CD8-positive, alpha-beta memory T cell (primary cell): ENCODE measurements at regions of chr15 and their contacts with region 1.

Region 1: GRCh38 chr15:44663409-44664308 is at the start of gene SPG11:
- DNase-seq: peak; percentile 90 to 98 (median 92)
- H3K4me3 ChIP-seq: peak within 1 kb of the TSS; percentile 67
- H3K4me3 Mint-ChIP-seq: peak within 1 kb of the TSS; percentile 95 to 99 (median 98)
- H3K27ac ChIP-seq: peak within 1 kb of the TSS; percentile 86
- H3K27ac Mint-ChIP-seq: peak within 1 kb of the TSS; percentile 93 to 98 (median 98)
- H3K4me1 ChIP-seq: peaks cover 61% of the 10 kb centered on the region
- H3K4me1 Mint-ChIP-seq: peaks cover 59 to 80% (median 78%) of the 10 kb centered on the region in 3 donors
- H3K27me3 ChIP-seq: no peaks in the 10 kb centered on the region
- H3K27me3 Mint-ChIP-seq: no peaks in the 10 kb centered on the region
- total RNA-seq, gene SPG11: 60.8 to 62.1 TPM

Region 2: DNA sequence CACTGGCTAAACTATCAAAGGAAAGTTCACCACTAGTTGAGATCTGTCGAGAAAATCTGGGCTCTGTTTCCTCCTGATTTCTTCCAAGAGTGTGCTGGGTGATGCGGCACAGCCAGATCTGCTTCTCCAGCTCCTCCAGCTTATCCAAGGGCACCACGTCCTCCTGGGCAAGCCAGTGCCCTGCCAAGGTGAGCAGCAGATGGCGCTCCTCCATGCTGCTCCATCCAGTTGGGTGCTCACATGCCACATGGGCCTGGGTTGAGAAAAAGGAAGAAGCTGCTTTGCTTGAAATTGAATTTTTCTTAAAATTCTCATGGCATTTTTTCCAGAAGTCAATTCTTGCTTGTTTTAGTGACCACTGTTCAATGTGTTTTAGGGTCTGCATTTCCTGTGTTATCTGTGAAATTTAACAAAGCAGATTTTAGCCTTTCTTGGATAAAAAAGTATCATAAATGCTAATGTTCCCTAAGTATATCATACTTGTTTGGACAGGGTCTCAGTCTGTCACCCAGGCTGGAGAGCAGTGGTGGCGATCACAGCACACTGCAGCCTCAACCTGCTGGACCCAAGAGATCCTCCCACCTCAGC is 79.4 kb before region 1 on chr15:
- CTCF ChIA-PET with region 1: interaction called, 12 read pairs
- POLR2A ChIA-PET with region 1: no interaction called
- DNase-seq: peak; percentile 21 to 71 (median 35)
- H3K4me3 ChIP-seq: no peak overlapping the region
- H3K4me3 Mint-ChIP-seq: no peak overlapping the region
- H3K27ac ChIP-seq: no peak overlapping the region
- H3K27ac Mint-ChIP-seq: peak overlapping the region in 5 of 8 donors; percentile 7 to 92 (median 64)
- H3K4me1 ChIP-seq: peaks cover 3% of the 10 kb centered on the region
- H3K4me1 Mint-ChIP-seq: peaks cover 8 to 30% (median 19%) of the 10 kb centered on the region in 3 donors
- H3K27me3 ChIP-seq: no peaks in the 10 kb centered on the region
- H3K27me3 Mint-ChIP-seq: no peaks in the 10 kb centered on the region

Region 3: GRCh38 chr15:44676676-44677075 is 13.0 kb after region 1 on chr15:
- CTCF ChIA-PET with region 1: interaction called, 102 read pairs
- POLR2A ChIA-PET with region 1: interaction called, 33 read pairs
- DNase-seq: no peak
- H3K4me3 ChIP-seq: peak overlapping the region; percentile 48
- H3K4me3 Mint-ChIP-seq: peak overlapping the region; percentile 65 to 97 (median 89)
- H3K27ac ChIP-seq: peak overlapping the region; percentile 15
- H3K27ac Mint-ChIP-seq: peak overlapping the region; percentile 92 to 98 (median 96)
- H3K4me1 ChIP-seq: peaks cover 96% of the 10 kb centered on the region
- H3K4me1 Mint-ChIP-seq: peaks cover 82 to 95% (median 93%) of the 10 kb centered on the region in 3 donors
- H3K27me3 ChIP-seq: no peaks in the 10 kb centered on the region
- H3K27me3 Mint-ChIP-seq: no peaks in the 10 kb centered on the region

Region 4: GRCh38 chr15:44692659-44693058 is 29.0 kb after region 1 on chr15:
- CTCF ChIA-PET with region 1: interaction called, 85 read pairs
- POLR2A ChIA-PET with region 1: interaction called, 12 read pairs
- DNase-seq: no peak
- H3K4me3 ChIP-seq: no peak overlapping the region
- H3K4me3 Mint-ChIP-seq: no peak overlapping the region
- H3K27ac ChIP-seq: no peak overlapping the region
- H3K27ac Mint-ChIP-seq: peak overlapping the region in 4 of 8 donors; percentile 17 to 81 (median 32)
- H3K4me1 ChIP-seq: peaks cover 9% of the 10 kb centered on the region
- H3K4me1 Mint-ChIP-seq: peaks cover 34 to 66% (median 55%) of the 10 kb centered on the region in 3 donors
- H3K27me3 ChIP-seq: no peaks in the 10 kb centered on the region
- H3K27me3 Mint-ChIP-seq: no peaks in the 10 kb centered on the region

Region 5: DNA sequence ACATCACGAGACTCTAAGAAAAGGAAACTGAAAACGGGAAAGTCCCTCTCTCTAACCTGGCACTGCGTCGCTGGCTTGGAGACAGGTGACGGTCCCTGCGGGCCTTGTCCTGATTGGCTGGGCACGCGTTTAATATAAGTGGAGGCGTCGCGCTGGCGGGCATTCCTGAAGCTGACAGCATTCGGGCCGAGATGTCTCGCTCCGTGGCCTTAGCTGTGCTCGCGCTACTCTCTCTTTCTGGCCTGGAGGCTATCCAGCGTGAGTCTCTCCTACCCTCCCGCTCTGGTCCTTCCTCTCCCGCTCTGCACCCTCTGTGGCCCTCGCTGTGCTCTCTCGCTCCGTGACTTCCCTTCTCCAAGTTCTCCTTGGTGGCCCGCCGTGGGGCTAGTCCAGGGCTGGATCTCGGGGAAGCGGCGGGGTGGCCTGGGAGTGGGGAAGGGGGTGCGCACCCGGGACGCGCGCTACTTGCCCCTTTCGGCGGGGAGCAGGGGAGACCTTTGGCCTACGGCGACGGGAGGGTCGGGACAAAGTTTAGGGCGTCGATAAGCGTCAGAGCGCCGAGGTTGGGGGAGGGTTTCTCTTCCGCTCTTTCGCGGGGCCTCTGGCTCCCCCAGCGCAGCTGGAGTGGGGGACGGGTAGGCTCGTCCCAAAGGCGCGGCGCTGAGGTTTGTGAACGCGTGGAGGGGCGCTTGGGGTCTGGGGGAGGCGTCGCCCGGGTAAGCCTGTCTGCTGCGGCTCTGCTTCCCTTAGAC is 47.9 kb after region 1 on chr15 and contains the start of gene B2M:
- CTCF ChIA-PET with region 1: interaction called, 478 read pairs
- POLR2A ChIA-PET with region 1: interaction called, 604 read pairs
- DNase-seq: peak; percentile 90 to 99 (median 96)
- H3K4me3 ChIP-seq: peak within 1 kb of the TSS; percentile 79
- H3K4me3 Mint-ChIP-seq: peak within 1 kb of the TSS; percentile 96 to 100 (median 100)
- H3K27ac ChIP-seq: peak within 1 kb of the TSS; percentile 100
- H3K27ac Mint-ChIP-seq: peak within 1 kb of the TSS; percentile 99 to 100 (median 100)
- H3K4me1 ChIP-seq: peaks cover 48% of the 10 kb centered on the region
- H3K4me1 Mint-ChIP-seq: peaks cover 41 to 54% (median 51%) of the 10 kb centered on the region in 3 donors
- H3K27me3 ChIP-seq: no peaks in the 10 kb centered on the region
- H3K27me3 Mint-ChIP-seq: peaks cover 0 to 20% of the 10 kb centered on the region in 2 donors
- total RNA-seq, gene B2M: 4,597 to 4,837 TPM

Region 6: GRCh38 chr15:44738340-44738984 is 74.8 kb after region 1 on chr15:
- CTCF ChIA-PET with region 1: interaction called, 271 read pairs
- POLR2A ChIA-PET with region 1: interaction called, 87 read pairs
- DNase-seq: peak in 2 of 5 donors; percentile 61 to 64
- H3K4me3 ChIP-seq: no peak overlapping the region
- H3K4me3 Mint-ChIP-seq: peak overlapping the region; percentile 24 to 81 (median 51)
- H3K27ac ChIP-seq: no peak overlapping the region
- H3K27ac Mint-ChIP-seq: peak overlapping the region; percentile 18 to 88 (median 81)
- H3K4me1 ChIP-seq: peaks cover 54% of the 10 kb centered on the region
- H3K4me1 Mint-ChIP-seq: peaks cover 50 to 62% (median 60%) of the 10 kb centered on the region in 3 donors
- H3K27me3 ChIP-seq: no peaks in the 10 kb centered on the region
- H3K27me3 Mint-ChIP-seq: peaks cover 0 to 2% of the 10 kb centered on the region in 2 donors

Region 7: GRCh38 chr15:44788748-44789147 is 125.1 kb after region 1 on chr15:
- CTCF ChIA-PET with region 1: interaction called, 14 read pairs
- POLR2A ChIA-PET with region 1: interaction called, 5 read pairs
- DNase-seq: peak in 3 of 5 donors; percentile 21 to 77 (median 41)
- H3K4me3 ChIP-seq: no peak overlapping the region
- H3K4me3 Mint-ChIP-seq: peak overlapping the region in 3 of 7 donors; percentile 49 to 70 (median 56)
- H3K27ac ChIP-seq: no peak overlapping the region
- H3K27ac Mint-ChIP-seq: peak overlapping the region in 7 of 8 donors; percentile 24 to 92 (median 77)
- H3K4me1 ChIP-seq: no peaks in the 10 kb centered on the region
- H3K4me1 Mint-ChIP-seq: peaks cover 10 to 31% (median 16%) of the 10 kb centered on the region in 3 donors
- H3K27me3 ChIP-seq: no peaks in the 10 kb centered on the region
- H3K27me3 Mint-ChIP-seq: peaks cover 0 to 10% of the 10 kb centered on the region in 2 donors